Activated CD8-positive, alpha-beta T cell treated with anti-CD3 and anti-CD28 coated beads for 36 hours (primary cell): ENCODE measurements at regions of chr9 and their contacts with region 1.

Region 1: GRCh38 chr9:97598461-97599288 is 34.5 kb downstream of the TSTD2 start:
- DNase-seq: peak; percentile 88
- ATAC-seq: peak; percentile 98
- H3K4me3 Mint-ChIP-seq: no peak overlapping the region
- H3K27ac Mint-ChIP-seq: no peak overlapping the region
- H3K4me1 Mint-ChIP-seq: peaks cover 5% of the 10 kb centered on the region
- H3K27me3 Mint-ChIP-seq: no peaks in the 10 kb centered on the region
- CTCF ChIP-seq: peak; percentile 78

Region 2: GRCh38 chr9:96854073-96854876 is 744.4 kb before region 1 on chr9 and contains the start of gene ZNF782:
- CTCF ChIA-PET with region 1: interaction called, 13 read pairs
- POLR2A ChIA-PET with region 1: no interaction called
- intact Hi-C with region 1: no loop called
- DNase-seq: peak; percentile 91
- ATAC-seq: peak; percentile 89
- H3K4me3 Mint-ChIP-seq: peak within 1 kb of the TSS; percentile 96
- H3K27ac Mint-ChIP-seq: peak within 1 kb of the TSS; percentile 99
- H3K4me1 Mint-ChIP-seq: peaks cover 59% of the 10 kb centered on the region
- H3K27me3 Mint-ChIP-seq: peaks cover 15% of the 10 kb centered on the region
- CTCF ChIP-seq: no peak
- total RNA-seq, gene ZNF782: 4.7 to 5.0 TPM

Region 3: DNA sequence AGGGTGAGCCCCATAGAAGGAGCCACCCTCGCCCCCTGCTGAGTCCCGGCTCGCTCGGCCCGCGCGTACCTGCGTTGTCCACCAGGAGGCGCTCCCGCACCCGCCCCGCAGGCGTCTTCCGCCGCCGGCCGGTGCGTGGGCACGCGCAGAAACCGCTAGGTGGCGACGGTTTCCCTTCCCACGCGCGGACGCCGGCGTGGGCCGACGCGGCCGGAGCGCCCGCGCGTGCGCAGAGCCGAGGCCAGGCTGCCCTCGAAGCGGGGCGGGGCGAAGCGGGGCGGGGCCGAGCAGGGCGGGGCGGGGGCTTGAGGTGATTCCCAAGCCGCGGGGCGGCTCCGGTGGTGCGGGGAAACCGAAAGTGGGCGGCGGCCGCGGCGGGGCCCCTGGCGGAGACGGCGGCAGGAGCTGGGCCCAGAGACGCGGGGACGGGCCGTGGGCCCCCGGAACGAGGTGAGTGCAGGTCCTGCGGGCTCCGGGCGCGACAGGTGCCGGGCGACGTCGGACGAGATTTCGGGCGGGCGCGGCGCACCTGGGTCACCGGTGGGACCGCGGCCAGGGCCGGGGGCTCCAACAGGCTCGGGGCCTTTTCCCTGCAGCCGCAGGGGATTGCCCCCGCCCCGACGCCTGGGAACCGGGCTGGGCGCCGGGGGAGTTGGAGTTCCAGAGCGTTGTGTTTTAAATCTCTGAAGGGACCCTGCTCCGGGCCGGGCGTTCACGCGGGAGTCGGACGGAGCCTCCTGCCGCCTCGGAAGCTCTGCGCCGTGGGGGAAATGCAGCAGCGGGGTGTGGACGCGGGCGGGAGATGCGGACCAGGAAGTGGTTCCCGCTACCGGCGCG is 186.7 kb before region 1 on chr9 and contains the start of gene TDRD7:
- CTCF ChIA-PET with region 1: interaction called, 39 read pairs
- POLR2A ChIA-PET with region 1: no interaction called
- intact Hi-C with region 1: loop called (anchors 5 kb)
- DNase-seq: peak; percentile 86
- ATAC-seq: peak; percentile 89
- H3K4me3 Mint-ChIP-seq: peak within 1 kb of the TSS; percentile 84
- H3K27ac Mint-ChIP-seq: peak within 1 kb of the TSS; percentile 81
- H3K4me1 Mint-ChIP-seq: peaks cover 21% of the 10 kb centered on the region
- H3K27me3 Mint-ChIP-seq: peaks cover 19% of the 10 kb centered on the region
- CTCF ChIP-seq: peak; percentile 99
- total RNA-seq, gene TDRD7: 3.7 to 4.0 TPM

Region 4: DNA sequence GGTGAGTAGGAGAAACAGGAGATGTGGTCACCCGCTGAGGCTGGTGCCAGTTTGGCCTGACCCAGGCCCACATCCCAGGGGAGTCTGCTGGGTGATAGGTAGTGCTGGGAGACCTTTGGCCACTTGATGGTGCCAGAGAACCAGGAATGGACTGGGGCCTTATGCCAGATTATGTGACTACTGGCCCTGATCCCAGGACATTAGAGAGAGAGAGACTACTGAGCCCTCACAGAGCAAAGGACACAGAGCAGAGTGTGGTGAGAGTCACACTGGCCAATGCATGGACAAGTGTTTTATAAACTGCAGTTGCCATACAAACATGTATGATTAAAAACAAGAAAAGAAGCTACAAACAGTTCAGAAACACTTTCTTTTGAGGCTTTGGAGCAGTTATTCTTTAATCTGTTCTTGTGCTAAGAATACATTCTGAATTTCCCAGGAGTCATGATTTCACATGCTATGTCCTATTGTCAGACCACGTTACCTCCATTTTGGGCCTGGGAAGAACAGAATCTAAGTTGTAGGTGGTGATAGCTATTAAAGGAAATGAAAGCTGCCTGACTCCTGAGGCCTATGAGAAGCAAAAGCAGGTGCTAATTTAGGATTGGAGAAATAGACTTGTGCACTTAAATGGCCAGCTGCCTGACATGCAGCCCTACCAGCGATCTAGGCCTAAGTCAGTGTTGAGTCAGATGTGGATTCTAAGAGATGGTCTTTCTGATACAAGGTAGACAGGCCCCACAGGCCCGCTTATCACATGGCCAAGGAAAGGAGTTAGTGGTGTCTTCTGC is 129.8 kb before region 1 on chr9:
- CTCF ChIA-PET with region 1: interaction called, 156 read pairs
- POLR2A ChIA-PET with region 1: interaction called, 3 read pairs
- intact Hi-C with region 1: loop called (anchors 2 kb)
- DNase-seq: peak; percentile 64
- ATAC-seq: peak; percentile 83
- H3K4me3 Mint-ChIP-seq: no peak overlapping the region
- H3K27ac Mint-ChIP-seq: no peak overlapping the region
- H3K4me1 Mint-ChIP-seq: no peaks in the 10 kb centered on the region
- H3K27me3 Mint-ChIP-seq: no peaks in the 10 kb centered on the region
- CTCF ChIP-seq: peak; percentile 49

Region 5: DNA sequence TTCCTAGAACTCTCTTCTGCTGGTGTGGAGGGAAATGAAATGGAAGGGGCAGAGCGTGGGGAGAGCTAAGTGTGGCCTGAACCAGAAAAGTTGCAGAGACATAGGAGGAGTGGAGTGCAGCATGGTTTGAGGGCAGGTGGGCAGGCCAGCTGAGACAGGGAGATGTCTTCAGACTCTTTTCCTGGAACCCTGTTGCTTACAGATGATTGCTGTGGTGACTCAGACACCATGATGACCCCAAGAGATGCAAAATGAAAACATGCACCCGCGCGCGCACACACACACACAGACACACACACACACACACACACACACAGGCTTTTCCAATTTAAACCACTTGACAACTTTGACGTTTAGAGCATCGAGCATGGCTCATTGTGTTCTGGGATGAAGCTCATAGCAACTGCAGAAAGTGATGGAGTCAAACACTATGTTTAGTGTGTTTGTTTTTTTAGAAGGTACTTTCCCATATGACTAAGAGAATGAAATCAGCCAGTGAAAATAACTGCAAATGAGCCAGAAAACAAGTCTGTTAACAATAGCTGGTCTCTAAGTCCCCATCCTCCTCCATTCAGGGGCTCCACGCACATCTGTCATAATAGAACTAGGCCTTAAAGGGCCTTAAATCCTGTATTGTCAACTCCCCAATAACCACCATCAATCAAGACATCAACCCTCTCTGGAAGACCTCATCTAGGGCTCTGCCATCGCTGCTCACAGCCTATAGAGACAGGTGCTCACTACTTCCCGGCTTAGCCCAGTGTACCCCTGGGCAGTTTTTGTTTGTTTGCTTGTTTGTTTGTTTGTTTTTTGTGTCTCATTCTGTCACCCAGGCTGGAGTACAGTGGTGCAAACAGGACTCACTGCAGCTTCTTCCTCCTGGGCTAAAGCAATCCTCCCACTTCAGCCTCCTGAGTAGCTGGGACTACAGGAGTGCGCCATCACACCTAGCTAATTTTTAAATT is 87.6 kb before region 1 on chr9:
- CTCF ChIA-PET with region 1: interaction called, 10 read pairs
- POLR2A ChIA-PET with region 1: no interaction called
- intact Hi-C with region 1: no loop called
- DNase-seq: peak; percentile 40
- ATAC-seq: peak; percentile 83
- H3K4me3 Mint-ChIP-seq: no peak overlapping the region
- H3K27ac Mint-ChIP-seq: peak overlapping the region; percentile 47
- H3K4me1 Mint-ChIP-seq: peaks cover 9% of the 10 kb centered on the region
- H3K27me3 Mint-ChIP-seq: peaks cover 4% of the 10 kb centered on the region
- CTCF ChIP-seq: no peak

Region 6: GRCh38 chr9:97632985-97633858 is 34.5 kb after region 1 on chr9 and contains the starts of genes NCBP1 and TSTD2:
- CTCF ChIA-PET with region 1: interaction called, 14 read pairs
- POLR2A ChIA-PET with region 1: no interaction called
- intact Hi-C with region 1: no loop called
- DNase-seq: peak; percentile 98
- ATAC-seq: peak; percentile 91
- H3K4me3 Mint-ChIP-seq: peak within 1 kb of the TSS; percentile 98
- H3K27ac Mint-ChIP-seq: peak within 1 kb of the TSS; percentile 99
- H3K4me1 Mint-ChIP-seq: peaks cover 48% of the 10 kb centered on the region
- H3K27me3 Mint-ChIP-seq: no peaks in the 10 kb centered on the region
- CTCF ChIP-seq: no peak
- total RNA-seq, gene NCBP1: 37.6 to 41.7 TPM
- total RNA-seq, gene TSTD2: 15.2 to 15.3 TPM

Region 7: GRCh38 chr9:97689401-97689800 is 90.7 kb after region 1 on chr9:
- CTCF ChIA-PET with region 1: no interaction called
- POLR2A ChIA-PET with region 1: no interaction called
- intact Hi-C with region 1: no loop called
- DNase-seq: no peak
- ATAC-seq: no peak
- H3K4me3 Mint-ChIP-seq: no peak overlapping the region
- H3K27ac Mint-ChIP-seq: no peak overlapping the region
- H3K4me1 Mint-ChIP-seq: peaks cover 18% of the 10 kb centered on the region
- H3K27me3 Mint-ChIP-seq: no peaks in the 10 kb centered on the region
- CTCF ChIP-seq: no peak

Region 8: GRCh38 chr9:97990266-97990665 is 391.6 kb after region 1 on chr9:
- CTCF ChIA-PET with region 1: no interaction called
- POLR2A ChIA-PET with region 1: no interaction called
- intact Hi-C with region 1: no loop called
- DNase-seq: no peak
- ATAC-seq: no peak
- H3K4me3 Mint-ChIP-seq: peak overlapping the region; percentile 2
- H3K27ac Mint-ChIP-seq: peak overlapping the region; percentile 79
- H3K4me1 Mint-ChIP-seq: peaks cover 86% of the 10 kb centered on the region
- H3K27me3 Mint-ChIP-seq: no peaks in the 10 kb centered on the region
- CTCF ChIP-seq: no peak